Mammary epithelial cell (primary cell): ENCODE measurements at regions of chr1 and their contacts with region 1.

Region 1: GRCh38 chr1:22416555-22417454 is 34.8 kb upstream of the ZBTB40 start:
- DNase-seq: peak; percentile 53
- H3K4me3 ChIP-seq: no peak overlapping the region
- H3K27ac ChIP-seq: no peak overlapping the region
- H3K4me1 ChIP-seq: peaks cover 6% of the 10 kb centered on the region
- H3K27me3 ChIP-seq: no peaks in the 10 kb centered on the region
- CTCF ChIP-seq: peak; percentile 88 to 99

Region 2: DNA sequence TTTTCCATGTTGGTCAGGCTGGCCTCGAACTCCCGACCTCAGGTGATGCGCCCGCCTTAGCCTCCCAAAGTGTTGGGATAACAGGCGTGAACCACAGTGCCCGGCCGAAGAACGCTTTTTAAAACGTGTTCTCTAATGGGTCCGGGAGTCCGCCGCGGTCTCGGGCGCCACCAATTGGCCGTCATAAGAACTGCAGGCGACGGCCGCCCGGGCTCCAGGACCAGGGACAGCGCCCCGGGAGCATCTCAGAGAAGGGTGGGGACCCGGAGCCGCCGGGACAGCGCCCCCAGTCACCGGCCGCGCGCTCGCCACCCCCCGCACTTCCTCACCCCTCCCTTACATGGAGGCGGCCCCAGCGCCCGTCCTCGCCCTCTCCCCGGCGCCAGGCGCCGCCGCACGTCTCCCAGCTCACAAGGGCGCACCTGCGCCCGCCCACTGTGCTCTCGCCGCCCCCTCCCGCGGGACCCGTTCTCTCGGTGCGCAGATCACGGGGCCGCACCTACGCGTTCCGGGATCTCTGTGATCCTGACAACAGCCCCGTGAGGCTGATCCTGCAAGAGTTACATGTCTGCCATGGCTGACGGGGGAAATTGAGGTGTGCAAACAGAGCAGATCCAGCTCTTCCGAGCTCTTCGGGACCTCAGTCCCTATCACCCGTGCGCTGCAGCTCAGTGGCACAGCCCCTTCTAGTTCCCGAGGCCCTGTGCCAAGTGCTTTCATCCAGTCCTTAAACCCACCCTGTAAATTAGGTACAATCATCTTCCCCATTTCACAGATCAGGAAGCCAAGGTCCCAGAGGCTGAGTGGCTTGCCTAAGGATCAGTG is 757.5 kb before region 1 on chr1:
- CTCF ChIA-PET with region 1: no interaction called
- dilution Hi-C with region 1: no loop called
- in situ Hi-C with region 1: no loop called
- intact Hi-C with region 1: loop called (anchors 1 kb)
- DNase-seq: peak; percentile 62
- H3K4me3 ChIP-seq: no peak overlapping the region
- H3K27ac ChIP-seq: no peak overlapping the region
- H3K4me1 ChIP-seq: peaks cover 5% of the 10 kb centered on the region
- H3K27me3 ChIP-seq: no peaks in the 10 kb centered on the region
- CTCF ChIP-seq: peak; percentile 76 to 89

Region 3: DNA sequence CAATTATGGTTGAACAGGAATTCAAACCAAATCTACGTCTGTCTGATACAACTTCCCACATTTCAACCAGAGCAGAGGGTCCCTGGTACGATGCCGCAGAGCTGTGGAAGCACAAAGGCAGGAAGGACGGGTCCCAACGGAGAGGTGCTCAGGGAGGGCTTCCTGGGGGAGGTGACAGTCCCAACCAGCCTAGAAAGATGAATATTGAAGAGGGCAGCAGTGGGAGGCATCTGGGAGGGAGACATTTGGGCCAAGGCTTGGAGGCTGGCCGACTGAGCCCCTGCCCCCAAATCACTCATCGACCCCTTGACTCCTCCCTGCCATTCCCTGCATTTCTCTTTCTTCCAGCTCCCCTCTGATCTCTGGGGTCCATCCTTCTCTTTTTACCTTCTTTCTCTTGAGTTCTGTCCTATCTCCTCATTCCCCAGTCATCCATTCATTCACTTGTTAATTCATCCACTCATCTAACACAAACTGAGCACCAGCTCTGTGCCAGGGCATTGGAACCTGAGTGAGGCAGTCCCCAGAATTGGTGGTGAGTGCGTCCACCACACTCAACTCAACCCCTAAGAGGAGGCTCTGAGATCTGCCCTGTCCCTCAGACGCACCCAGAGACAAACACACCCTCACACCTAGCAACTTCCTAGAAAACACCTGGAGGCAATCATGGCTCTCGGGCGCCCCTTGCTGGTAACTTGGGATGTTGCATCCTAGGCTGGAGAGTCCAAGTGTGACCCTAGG is 453.2 kb before region 1 on chr1:
- CTCF ChIA-PET with region 1: no interaction called
- dilution Hi-C with region 1: no loop called
- in situ Hi-C with region 1: no loop called
- intact Hi-C with region 1: loop called (anchors 2 kb)
- DNase-seq: peak; percentile 71
- H3K4me3 ChIP-seq: no peak overlapping the region
- H3K27ac ChIP-seq: no peak overlapping the region
- H3K4me1 ChIP-seq: peaks cover 3% of the 10 kb centered on the region
- H3K27me3 ChIP-seq: no peaks in the 10 kb centered on the region
- CTCF ChIP-seq: peak; percentile 94

Region 4: DNA sequence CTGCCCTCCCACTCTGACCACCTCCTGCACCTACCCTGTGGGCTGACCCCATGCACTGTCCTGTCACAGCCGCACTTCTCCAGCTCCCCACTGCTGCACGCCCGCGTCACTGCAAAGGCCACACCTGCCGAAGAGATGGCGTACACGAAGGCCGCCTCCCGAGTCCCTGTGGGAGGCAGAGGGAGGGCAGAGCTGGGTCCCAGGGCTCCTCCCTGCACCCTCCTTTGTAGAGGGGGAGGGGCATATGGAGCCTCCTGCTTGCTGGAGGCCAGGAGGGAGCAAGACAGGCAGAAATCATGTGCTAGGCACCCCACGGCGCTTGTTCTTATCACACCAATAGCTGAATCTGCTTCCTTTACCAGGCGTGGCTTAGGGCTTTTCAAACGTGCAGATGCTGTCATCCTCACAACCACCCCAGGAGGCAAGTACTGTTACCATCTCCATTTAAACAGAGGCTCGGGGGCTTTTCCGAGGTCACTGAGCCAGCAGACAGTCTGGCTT is 295.3 kb before region 1 on chr1:
- CTCF ChIA-PET with region 1: no interaction called
- dilution Hi-C with region 1: no loop called
- in situ Hi-C with region 1: no loop called
- intact Hi-C with region 1: no loop called
- DNase-seq: no peak
- H3K4me3 ChIP-seq: no peak overlapping the region
- H3K27ac ChIP-seq: no peak overlapping the region
- H3K4me1 ChIP-seq: no peaks in the 10 kb centered on the region
- H3K27me3 ChIP-seq: no peaks in the 10 kb centered on the region
- CTCF ChIP-seq: no peak

Region 5: DNA sequence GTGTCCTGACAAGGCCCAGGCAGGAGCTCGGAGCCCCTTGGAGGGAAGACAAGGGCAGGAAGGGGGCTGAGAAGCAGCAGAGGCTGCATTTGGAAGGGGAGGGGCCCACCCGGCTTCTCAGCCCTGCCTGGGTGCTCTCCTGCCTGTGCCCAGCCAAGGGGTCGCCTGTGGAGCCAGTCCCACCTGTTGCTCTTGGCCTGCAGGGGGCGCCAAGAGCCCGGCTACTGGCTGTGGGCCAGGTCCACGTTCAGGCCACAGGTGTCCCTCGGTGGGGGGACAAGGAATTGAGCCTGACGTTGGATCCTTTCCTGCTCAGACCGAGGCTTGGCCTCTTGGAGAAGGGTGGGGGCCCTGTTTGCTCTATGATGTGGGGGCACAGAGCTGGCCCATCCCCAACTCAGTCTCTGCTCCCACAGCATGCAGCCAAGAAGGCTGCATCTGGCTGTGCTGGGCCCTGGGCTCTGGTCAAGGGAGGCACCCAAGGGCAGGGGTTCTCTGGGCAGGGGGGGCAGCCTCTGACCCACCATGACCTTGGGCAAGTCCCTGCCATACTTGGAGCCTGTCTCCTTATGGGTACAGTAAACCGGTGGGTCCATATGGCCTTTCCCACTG is 284.8 kb before region 1 on chr1:
- CTCF ChIA-PET with region 1: no interaction called
- dilution Hi-C with region 1: no loop called
- in situ Hi-C with region 1: loop called (anchors 10 kb)
- intact Hi-C with region 1: loop called (anchors 1 kb)
- DNase-seq: peak; percentile 26
- H3K4me3 ChIP-seq: no peak overlapping the region
- H3K27ac ChIP-seq: no peak overlapping the region
- H3K4me1 ChIP-seq: peaks cover 16% of the 10 kb centered on the region
- H3K27me3 ChIP-seq: no peaks in the 10 kb centered on the region
- CTCF ChIP-seq: peak; percentile 82 to 90

Region 6: GRCh38 chr1:22641906-22642636 is 225.3 kb after region 1 on chr1:
- CTCF ChIA-PET with region 1: no interaction called
- dilution Hi-C with region 1: no loop called
- in situ Hi-C with region 1: loop called in 1 of 2 experiments (anchors 5 kb)
- intact Hi-C with region 1: loop called (anchors 1 kb)
- DNase-seq: peak; percentile 19
- H3K4me3 ChIP-seq: no peak overlapping the region
- H3K27ac ChIP-seq: no peak overlapping the region
- H3K4me1 ChIP-seq: no peaks in the 10 kb centered on the region
- H3K27me3 ChIP-seq: no peaks in the 10 kb centered on the region
- CTCF ChIP-seq: peak; percentile 56 to 93

Region 7: GRCh38 chr1:22739648-22740385 is 323.0 kb after region 1 on chr1:
- CTCF ChIA-PET with region 1: no interaction called
- dilution Hi-C with region 1: no loop called
- in situ Hi-C with region 1: no loop called
- intact Hi-C with region 1: no loop called
- DNase-seq: no peak
- H3K4me3 ChIP-seq: no peak overlapping the region
- H3K27ac ChIP-seq: no peak overlapping the region
- H3K4me1 ChIP-seq: no peaks in the 10 kb centered on the region
- H3K27me3 ChIP-seq: no peaks in the 10 kb centered on the region
- CTCF ChIP-seq: no peak

Region 8: DNA sequence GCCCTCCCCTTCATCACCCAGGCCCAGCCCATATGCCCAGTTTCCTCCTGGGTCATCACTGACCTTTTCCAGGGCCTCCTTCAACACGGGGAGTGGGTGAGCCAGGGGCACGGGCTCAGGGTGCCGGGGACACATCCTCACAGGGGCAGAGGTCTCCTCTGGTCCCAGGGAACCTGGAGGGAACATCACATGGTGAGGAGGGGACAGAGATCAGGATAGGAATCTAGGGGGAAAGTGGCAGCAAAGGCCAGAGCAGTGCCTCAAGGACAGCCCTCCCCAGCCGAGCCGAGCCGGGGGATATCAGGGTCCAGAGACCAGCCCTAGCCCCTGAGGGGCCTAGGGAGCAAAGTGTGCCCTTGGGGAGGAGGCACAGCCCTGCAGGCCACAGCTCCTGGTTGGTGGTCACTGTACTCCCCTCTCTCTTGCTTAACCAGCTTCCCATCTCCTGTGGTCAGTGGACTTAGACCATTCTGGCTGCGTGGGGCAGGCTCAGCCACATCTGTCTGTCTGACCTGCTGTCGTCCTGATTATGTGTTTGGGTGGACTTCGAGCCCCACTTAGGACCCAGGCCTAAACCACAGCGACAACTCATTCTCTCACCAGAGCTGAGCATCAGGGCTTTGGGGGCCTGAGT is 546.4 kb after region 1 on chr1:
- CTCF ChIA-PET with region 1: no interaction called
- dilution Hi-C with region 1: no loop called
- in situ Hi-C with region 1: no loop called
- intact Hi-C with region 1: loop called (anchors 2 kb)
- DNase-seq: no peak
- H3K4me3 ChIP-seq: no peak overlapping the region
- H3K27ac ChIP-seq: no peak overlapping the region
- H3K4me1 ChIP-seq: no peaks in the 10 kb centered on the region
- H3K27me3 ChIP-seq: no peaks in the 10 kb centered on the region
- CTCF ChIP-seq: no peak